ENCODE measurements at regions of chr17 and their contacts with region 1.

Region 1: GRCh38 chr17:28644985-28645939 is at the start of gene BLTP2:
- DNase-seq: peak; percentile 97 to 99 (median 98)
- ATAC-seq: peak; percentile 97 to 98 (median 98)
- H3K4me3 ChIP-seq: peak within 1 kb of the TSS; percentile 67 to 97 (median 90)
- H3K27ac ChIP-seq: peak within 1 kb of the TSS; percentile 85 to 98 (median 94)
- H3K4me1 ChIP-seq: peaks cover 4 to 60% (median 33%) of the 10 kb centered on the region in 12 donors
- H3K27me3 ChIP-seq: no peaks in the 10 kb centered on the region
- CTCF ChIP-seq: no peak
- POLR2A ChIP-seq: peak in 1 of 2 donors; percentile 91
- total RNA-seq, gene BLTP2: 63.6 to 116 (median 74.1) TPM

Region 2: DNA sequence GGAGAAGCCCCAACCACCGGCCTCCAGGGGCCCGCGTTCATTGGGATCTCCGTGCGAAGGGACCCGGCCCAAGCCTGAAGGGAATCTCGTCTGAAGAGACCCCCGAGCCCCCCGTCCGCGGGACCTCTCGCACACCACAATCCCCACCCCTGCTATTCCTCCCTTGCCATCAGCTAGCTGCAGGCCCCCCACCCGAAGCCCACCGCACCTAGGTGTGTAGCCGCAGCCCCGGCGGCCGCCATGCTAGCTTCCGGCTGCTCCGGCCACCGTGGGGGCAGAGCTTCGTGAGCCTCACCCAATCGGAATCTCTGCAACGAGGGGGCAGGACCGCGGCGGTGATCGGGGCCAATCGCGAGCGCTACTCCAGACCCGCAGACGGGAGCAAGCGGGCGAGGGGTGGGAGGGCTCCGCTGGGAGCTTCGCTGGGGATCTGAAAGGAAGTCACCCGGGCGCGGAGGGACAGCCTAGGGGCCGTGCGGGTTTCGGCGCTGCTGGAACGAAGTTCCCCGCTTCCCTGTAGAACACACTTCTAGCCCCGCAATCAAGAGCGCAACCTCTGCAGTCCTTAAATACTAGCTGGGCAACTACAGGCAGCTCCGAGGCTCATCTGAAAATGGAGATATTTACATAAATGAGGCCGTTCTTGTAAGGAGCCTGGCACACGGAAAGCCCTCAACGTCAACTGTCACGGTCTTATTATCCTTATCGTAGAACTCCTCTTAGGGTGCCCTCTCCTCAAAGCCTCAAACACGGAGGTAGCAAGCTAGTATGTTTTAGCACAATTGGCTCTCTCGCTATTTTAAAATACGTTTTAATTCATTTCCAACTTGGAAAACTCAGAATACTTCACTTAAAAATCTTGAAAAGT is 73.8 kb before region 1 on chr17 and contains the start of gene PIGS:
- intact Hi-C with region 1: loop called in 1 of 10 experiments (anchors 5 kb)
- DNase-seq: peak; percentile 96 to 98 (median 97)
- ATAC-seq: peak; percentile 91 to 95 (median 92)
- H3K4me3 ChIP-seq: peak within 1 kb of the TSS; percentile 73 to 100 (median 92)
- H3K27ac ChIP-seq: peak within 1 kb of the TSS in 11 of 12 donors; percentile 75 to 93 (median 81)
- H3K4me1 ChIP-seq: peaks cover 0 to 53% (median 24%) of the 10 kb centered on the region in 12 donors
- H3K27me3 ChIP-seq: no peaks in the 10 kb centered on the region
- CTCF ChIP-seq: peak in 1 of 12 donors; percentile 14
- POLR2A ChIP-seq: peak in 1 of 2 donors; percentile 89
- total RNA-seq, gene PIGS: 44.7 to 83.1 (median 55.1) TPM

Region 3: DNA sequence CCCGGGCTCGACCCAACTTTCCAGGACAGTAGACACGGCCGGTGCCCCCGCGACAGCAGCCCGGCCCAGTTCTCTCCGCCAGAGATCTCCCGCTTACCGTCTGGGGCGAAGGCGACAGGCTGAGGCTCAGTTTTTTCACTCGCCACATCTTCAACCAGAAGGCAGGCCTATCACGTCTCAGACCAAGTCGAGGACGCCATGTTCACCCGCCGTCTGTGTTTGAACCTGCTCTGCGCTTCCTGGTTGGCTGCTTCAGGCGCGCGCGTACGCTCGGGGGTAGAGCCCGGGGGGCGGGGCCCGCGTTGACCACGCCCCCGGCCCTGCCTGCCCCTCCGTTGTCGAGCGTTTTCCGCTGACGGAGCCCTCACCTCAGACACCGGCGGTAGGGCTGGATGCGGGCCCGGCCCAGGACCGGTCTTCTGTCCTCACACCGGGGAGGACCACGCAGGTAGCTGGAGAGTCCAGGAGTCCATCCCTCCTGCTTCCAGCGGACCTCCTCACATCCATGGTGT is 46.4 kb before region 1 on chr17 and contains the start of gene SPAG5:
- intact Hi-C with region 1: loop called in 1 of 10 experiments (anchors 2 kb)
- DNase-seq: peak; percentile 92 to 96 (median 93)
- ATAC-seq: peak; percentile 97 to 100 (median 99)
- H3K4me3 ChIP-seq: peak within 1 kb of the TSS; percentile 49 to 86 (median 66)
- H3K27ac ChIP-seq: peak within 1 kb of the TSS; percentile 69 to 97 (median 94)
- H3K4me1 ChIP-seq: peaks cover 0 to 30% (median 13%) of the 10 kb centered on the region in 12 donors
- H3K27me3 ChIP-seq: no peaks in the 10 kb centered on the region
- CTCF ChIP-seq: no peak
- POLR2A ChIP-seq: peak; percentile 49 to 83
- total RNA-seq, gene SPAG5: 0.39 to 11.6 (median 1.5) TPM

Region 4: DNA sequence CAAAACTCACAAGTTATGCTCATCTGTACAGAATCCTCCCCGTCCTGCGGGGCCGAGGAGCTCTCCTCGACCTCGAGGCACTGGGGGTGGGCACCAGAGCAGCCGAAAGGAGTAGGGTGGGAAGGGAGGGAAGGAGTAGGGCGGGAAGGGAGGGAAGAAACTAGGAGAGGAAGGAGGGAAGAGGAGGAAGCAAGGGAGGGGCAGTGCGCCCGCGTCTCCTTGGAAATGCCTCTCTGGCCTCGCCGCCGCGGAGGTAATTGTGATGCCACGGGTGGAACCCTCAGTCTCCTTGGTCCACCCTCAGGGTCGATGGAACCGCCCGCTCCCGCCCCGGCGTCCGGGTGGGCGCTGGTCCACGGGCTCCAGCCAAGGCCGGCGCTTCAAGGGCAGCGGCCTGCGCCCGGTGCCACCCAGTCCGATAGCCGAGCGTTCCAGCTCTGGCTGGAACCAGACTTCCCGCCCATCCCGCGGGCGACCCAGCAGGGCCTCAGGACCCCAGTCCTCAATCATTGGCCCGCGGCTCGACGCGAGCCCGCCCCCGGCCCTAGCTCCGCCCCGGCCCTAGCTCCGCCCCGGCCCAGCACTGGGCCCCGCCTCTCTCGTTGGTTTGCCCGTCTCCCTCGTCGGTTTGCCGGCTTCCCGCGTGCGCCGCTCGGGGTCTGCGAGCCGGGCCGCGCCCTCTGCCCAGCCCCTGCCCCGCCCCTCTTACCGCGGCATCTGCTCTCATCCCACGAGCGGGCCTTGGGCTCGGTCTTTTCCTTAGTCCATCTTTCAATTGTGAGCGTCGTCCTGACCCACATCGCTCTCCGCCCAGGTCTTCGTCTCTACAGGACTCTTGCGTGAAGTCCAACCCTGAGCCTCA is 65.8 kb after region 1 on chr17:
- intact Hi-C with region 1: loop called in 3 of 10 experiments (anchors 2 to 5 kb)
- DNase-seq: peak; percentile 90 to 95 (median 91)
- ATAC-seq: peak; percentile 85 to 96 (median 94)
- H3K4me3 ChIP-seq: peak overlapping the region; percentile 22 to 93 (median 72)
- H3K27ac ChIP-seq: peak overlapping the region; percentile 54 to 97 (median 93)
- H3K4me1 ChIP-seq: peaks cover 0 to 29% (median 14%) of the 10 kb centered on the region in 12 donors
- H3K27me3 ChIP-seq: no peaks in the 10 kb centered on the region
- CTCF ChIP-seq: no peak
- POLR2A ChIP-seq: peak in 1 of 2 donors; percentile 92

Region 5: GRCh38 chr17:28717578-28718333 is 72.5 kb after region 1 on chr17 and contains the start of gene RAB34:
- intact Hi-C with region 1: loop called in 3 of 10 experiments (anchors 2 to 5 kb)
- DNase-seq: peak; percentile 76 to 84 (median 80)
- ATAC-seq: peak in 3 of 4 donors; percentile 18 to 28 (median 23)
- H3K4me3 ChIP-seq: peak within 1 kb of the TSS; percentile 41 to 92 (median 74)
- H3K27ac ChIP-seq: peak within 1 kb of the TSS; percentile 66 to 96 (median 90)
- H3K4me1 ChIP-seq: peaks cover 0 to 61% (median 41%) of the 10 kb centered on the region in 12 donors
- H3K27me3 ChIP-seq: peaks cover 0 to 18% (median 0%) of the 10 kb centered on the region in 9 donors
- CTCF ChIP-seq: peak in 7 of 12 donors; percentile 16 to 49 (median 28)
- POLR2A ChIP-seq: peak in 1 of 2 donors; percentile 29
- total RNA-seq, gene RAB34: 11.5 to 31.7 (median 14.9) TPM

Measured in heart left ventricle (tissue), 16 donors.